MCF 10A (cell line): ENCODE measurements at regions of chr16 and their contacts with region 1.

Region 1: DNA sequence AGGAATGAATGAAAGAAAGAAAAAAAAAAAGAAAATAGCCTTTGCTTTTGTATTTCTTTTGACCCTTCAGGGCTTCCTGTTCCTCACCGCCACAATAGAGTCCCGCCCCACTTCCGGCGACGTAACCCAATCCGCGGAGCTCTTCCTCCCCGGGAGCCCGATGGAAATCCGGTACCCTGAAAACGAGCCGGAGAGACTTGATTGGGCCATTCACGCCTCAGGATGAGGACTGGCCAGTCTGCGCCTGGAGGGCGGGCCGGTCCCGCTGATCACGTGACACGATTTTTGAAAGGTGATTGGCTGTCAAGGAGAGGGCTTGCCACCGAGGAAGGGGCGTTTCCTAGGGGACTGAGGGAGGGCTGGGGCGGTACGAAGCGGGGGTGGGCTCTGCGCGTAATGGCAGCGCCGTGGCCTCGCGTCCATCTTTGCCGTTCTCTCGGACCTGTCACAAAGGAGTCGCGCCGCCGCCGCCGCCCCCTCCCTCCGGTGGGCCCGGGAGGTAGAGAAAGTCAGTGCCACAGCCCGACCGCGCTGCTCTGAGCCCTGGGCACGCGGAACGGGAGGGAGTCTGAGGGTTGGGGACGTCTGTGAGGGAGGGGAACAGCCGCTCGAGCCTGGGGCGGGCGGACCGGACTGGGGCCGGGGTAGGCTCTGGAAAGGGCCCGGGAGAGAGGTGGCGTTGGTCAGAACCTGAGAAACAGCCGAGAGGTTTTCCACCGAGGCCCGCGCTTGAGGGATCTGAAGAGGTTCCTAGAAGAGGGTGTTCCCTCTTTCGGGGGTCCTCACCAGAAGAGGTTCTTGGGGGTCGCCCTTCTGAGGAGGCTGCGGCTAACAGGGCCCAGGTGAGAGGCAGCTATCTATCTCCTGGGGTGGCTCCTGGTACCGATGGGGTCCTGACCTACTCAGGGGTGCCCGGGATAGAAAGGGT is at the starts of genes PSME3IP1 and RSPRY1:
- DNase-seq: peak; percentile 99
- H3K4me3 Mint-ChIP-seq: peak within 1 kb of the TSS; percentile 95
- H3K27ac Mint-ChIP-seq: peak within 1 kb of the TSS; percentile 98
- H3K4me1 Mint-ChIP-seq: peaks cover 35% of the 10 kb centered on the region
- H3K27me3 Mint-ChIP-seq: no peaks in the 10 kb centered on the region
- CTCF ChIP-seq: no peak
- total RNA-seq, gene PSME3IP1: 100 and 107 TPM in 2 replicates
- total RNA-seq, gene RSPRY1: 55.9 and 62.0 TPM in 2 replicates

Region 2: DNA sequence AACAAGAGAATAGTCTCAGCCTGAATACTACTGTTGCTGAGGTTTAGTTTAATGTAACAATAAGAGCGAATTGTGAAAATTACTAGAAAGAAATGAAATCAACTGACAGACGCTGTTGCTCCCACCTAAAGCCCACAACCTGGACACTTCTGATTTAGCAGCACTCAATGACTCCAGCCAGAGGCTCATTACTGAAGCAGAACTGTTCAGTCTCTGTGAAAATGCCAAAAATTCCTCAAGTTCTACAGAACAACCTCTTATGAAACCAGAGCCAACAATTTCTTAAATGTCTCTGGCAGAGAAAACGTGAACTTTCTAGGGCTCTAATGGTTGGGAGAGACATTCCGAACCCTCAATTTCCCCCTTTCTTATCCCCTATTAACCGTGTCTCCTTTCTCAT is 10.3 kb before region 1 on chr16:
- CTCF ChIA-PET with region 1: interaction called, 6 read pairs
- POLR2A ChIA-PET with region 1: interaction called, 24 read pairs
- intact Hi-C with region 1: no loop called
- DNase-seq: no peak
- H3K4me3 Mint-ChIP-seq: no peak overlapping the region
- H3K27ac Mint-ChIP-seq: no peak overlapping the region
- H3K4me1 Mint-ChIP-seq: no peaks in the 10 kb centered on the region
- H3K27me3 Mint-ChIP-seq: no peaks in the 10 kb centered on the region
- CTCF ChIP-seq: no peak

Region 3: GRCh38 chr16:57244767-57245471 is 58.7 kb after region 1 on chr16 and contains the start of gene ARL2BP:
- CTCF ChIA-PET with region 1: interaction called, 3 read pairs
- POLR2A ChIA-PET with region 1: interaction called, 49 read pairs
- intact Hi-C with region 1: loop called (anchors 2 kb)
- DNase-seq: peak; percentile 97
- H3K4me3 Mint-ChIP-seq: peak within 1 kb of the TSS; percentile 82
- H3K27ac Mint-ChIP-seq: peak within 1 kb of the TSS; percentile 97
- H3K4me1 Mint-ChIP-seq: peaks cover 10% of the 10 kb centered on the region
- H3K27me3 Mint-ChIP-seq: no peaks in the 10 kb centered on the region
- CTCF ChIP-seq: peak; percentile 8
- total RNA-seq, gene ARL2BP: 94.4 and 114 TPM in 2 replicates

Region 4: GRCh38 chr16:57383276-57384247 is 197.4 kb after region 1 on chr16:
- CTCF ChIA-PET with region 1: no interaction called
- POLR2A ChIA-PET with region 1: no interaction called
- intact Hi-C with region 1: no loop called
- DNase-seq: no peak
- H3K4me3 Mint-ChIP-seq: no peak overlapping the region
- H3K27ac Mint-ChIP-seq: no peak overlapping the region
- H3K4me1 Mint-ChIP-seq: peaks cover 8% of the 10 kb centered on the region
- H3K27me3 Mint-ChIP-seq: no peaks in the 10 kb centered on the region
- CTCF ChIP-seq: no peak

Region 5: GRCh38 chr16:57413301-57413730 is 227.1 kb after region 1 on chr16:
- CTCF ChIA-PET with region 1: interaction called, 3 read pairs
- POLR2A ChIA-PET with region 1: no interaction called
- intact Hi-C with region 1: loop called (anchors 10 kb)
- DNase-seq: no peak
- H3K4me3 Mint-ChIP-seq: no peak overlapping the region
- H3K27ac Mint-ChIP-seq: no peak overlapping the region
- H3K4me1 Mint-ChIP-seq: peaks cover 22% of the 10 kb centered on the region
- H3K27me3 Mint-ChIP-seq: no peaks in the 10 kb centered on the region
- CTCF ChIP-seq: no peak